CD4-positive, alpha-beta T cell (primary cell): ENCODE measurements at regions of chr13 and their contacts with region 1.

Region 1: GRCh38 chr13:42594970-42595571 is 21.1 kb downstream of the TNFSF11 start:
- DNase-seq: peak; percentile 7 to 73 (median 34)
- ATAC-seq: no peak
- H3K4me3 ChIP-seq: no peak overlapping the region
- H3K4me3 Mint-ChIP-seq: no peak overlapping the region
- H3K27ac ChIP-seq: no peak overlapping the region
- H3K27ac Mint-ChIP-seq: no peak overlapping the region
- H3K4me1 ChIP-seq: no peaks in the 10 kb centered on the region
- H3K4me1 Mint-ChIP-seq: no peaks in the 10 kb centered on the region
- H3K27me3 ChIP-seq: no peaks in the 10 kb centered on the region
- H3K27me3 Mint-ChIP-seq: no peaks in the 10 kb centered on the region
- CTCF ChIP-seq: peak; percentile 92

Region 2: GRCh38 chr13:43058831-43059230 is 463.8 kb after region 1 on chr13:
- CTCF ChIA-PET with region 1: no interaction called
- POLR2A ChIA-PET with region 1: no interaction called
- intact Hi-C with region 1: no loop called
- DNase-seq: no peak
- ATAC-seq: no peak
- H3K4me3 ChIP-seq: no peak overlapping the region
- H3K4me3 Mint-ChIP-seq: no peak overlapping the region
- H3K27ac ChIP-seq: no peak overlapping the region
- H3K27ac Mint-ChIP-seq: no peak overlapping the region
- H3K4me1 ChIP-seq: peaks cover 24% of the 10 kb centered on the region
- H3K4me1 Mint-ChIP-seq: peaks cover 22% of the 10 kb centered on the region
- H3K27me3 ChIP-seq: no peaks in the 10 kb centered on the region
- H3K27me3 Mint-ChIP-seq: no peaks in the 10 kb centered on the region
- CTCF ChIP-seq: no peak

Region 3: DNA sequence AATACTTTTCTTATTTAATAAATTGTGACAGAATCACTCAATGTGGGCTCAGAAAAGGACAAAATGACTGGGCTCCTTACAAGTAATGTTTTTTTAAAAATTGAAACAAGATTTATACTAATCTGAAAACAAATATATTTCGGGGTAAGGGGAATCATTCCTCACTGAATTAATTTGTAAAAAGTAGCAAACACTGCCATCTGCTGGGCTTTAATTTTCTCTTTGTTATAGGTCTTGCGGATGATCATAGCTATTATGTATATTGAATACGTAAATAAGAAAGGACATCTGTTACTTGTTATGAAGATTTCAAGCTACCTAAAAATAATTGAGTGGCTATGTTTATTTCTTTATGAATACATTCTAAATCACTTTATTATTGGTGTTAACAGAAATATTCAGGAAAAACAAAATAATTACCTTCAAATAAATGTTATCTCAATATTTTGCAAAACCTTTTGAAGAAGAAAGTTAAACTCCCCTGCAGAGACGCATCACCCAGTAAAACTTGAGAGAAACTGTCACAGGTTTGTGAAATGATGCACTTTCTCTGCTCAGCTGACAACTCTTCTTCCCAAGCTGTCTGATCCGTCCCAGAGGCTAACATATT is 1209.5 kb after region 1 on chr13:
- CTCF ChIA-PET with region 1: interaction called, 3 read pairs
- POLR2A ChIA-PET with region 1: no interaction called
- intact Hi-C with region 1: loop called in 1 of 2 experiments (anchors 1 kb)
- DNase-seq: peak in 4 of 14 experiments; percentile 10 to 64 (median 60)
- ATAC-seq: no peak
- H3K4me3 ChIP-seq: no peak overlapping the region
- H3K4me3 Mint-ChIP-seq: no peak overlapping the region
- H3K27ac ChIP-seq: no peak overlapping the region
- H3K27ac Mint-ChIP-seq: no peak overlapping the region
- H3K4me1 ChIP-seq: no peaks in the 10 kb centered on the region
- H3K4me1 Mint-ChIP-seq: no peaks in the 10 kb centered on the region
- H3K27me3 ChIP-seq: peaks cover 0 to 4% of the 10 kb centered on the region in 2 experiments
- H3K27me3 Mint-ChIP-seq: peaks cover 22% of the 10 kb centered on the region
- CTCF ChIP-seq: peak; percentile 69

Region 4: GRCh38 chr13:43878892-43879754 is 1284.1 kb after region 1 on chr13 and contains the start of gene CCDC122:
- CTCF ChIA-PET with region 1: no interaction called
- POLR2A ChIA-PET with region 1: no interaction called
- intact Hi-C with region 1: loop called in 1 of 2 experiments (anchors 10 kb)
- DNase-seq: peak; percentile 31 to 91 (median 59)
- ATAC-seq: peak; percentile 90
- H3K4me3 ChIP-seq: peak within 1 kb of the TSS; percentile 76
- H3K4me3 Mint-ChIP-seq: peak within 1 kb of the TSS; percentile 91
- H3K27ac ChIP-seq: peak within 1 kb of the TSS; percentile 46 to 58
- H3K27ac Mint-ChIP-seq: peak within 1 kb of the TSS; percentile 79
- H3K4me1 ChIP-seq: peaks cover 16% of the 10 kb centered on the region
- H3K4me1 Mint-ChIP-seq: peaks cover 16% of the 10 kb centered on the region
- H3K27me3 ChIP-seq: no peaks in the 10 kb centered on the region
- H3K27me3 Mint-ChIP-seq: peaks cover 11% of the 10 kb centered on the region
- CTCF ChIP-seq: no peak
- total RNA-seq, gene CCDC122: 0.52 to 0.64 TPM